PC-9 (cell line): ENCODE measurements at regions of chr2 and their contacts with region 1.

Region 1: DNA sequence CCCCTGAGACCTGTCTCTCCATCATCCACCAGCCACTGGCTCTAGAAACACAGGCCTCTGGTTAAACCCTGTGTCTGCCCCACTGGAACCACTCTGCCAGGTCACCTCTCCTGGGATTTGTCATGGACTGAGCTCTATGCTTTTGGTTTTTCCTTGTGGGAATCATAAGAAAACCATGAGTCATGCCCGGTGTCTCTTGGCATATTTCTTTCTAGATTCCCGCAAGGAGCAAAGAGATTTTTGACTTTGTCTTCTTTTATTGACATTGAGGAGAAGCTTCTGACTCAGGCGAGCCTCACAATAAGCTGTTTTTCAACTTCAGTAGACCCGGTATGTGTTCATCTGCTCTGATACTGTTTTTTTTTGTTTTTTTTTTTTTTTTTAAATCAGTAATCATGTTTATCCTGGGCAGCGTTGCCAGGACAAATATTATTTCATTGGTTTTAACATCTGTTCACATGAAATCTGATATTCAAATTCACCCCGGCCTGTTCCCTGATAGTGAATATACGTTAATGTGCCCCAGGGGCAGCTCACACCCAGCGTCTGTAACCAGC is 207.1 kb downstream of the ACKR3 start:
- DNase-seq: peak; percentile 49 to 81
- H3K4me3 ChIP-seq: no peak overlapping the region
- H3K27ac ChIP-seq: peak overlapping the region; percentile 81
- H3K4me1 ChIP-seq: peaks cover 35% of the 10 kb centered on the region
- H3K27me3 ChIP-seq: peaks cover 4% of the 10 kb centered on the region; the same call in 1 of the 2 replicates
- CTCF ChIP-seq: no peak

Region 2: GRCh38 chr2:235868224-235868623 is 908.5 kb before region 1 on chr2:
- CTCF ChIA-PET with region 1: no interaction called
- POLR2A ChIA-PET with region 1: interaction called, 13 read pairs
- intact Hi-C with region 1: no loop called
- DNase-seq: no peak
- H3K4me3 ChIP-seq: no peak overlapping the region
- H3K27ac ChIP-seq: no peak overlapping the region
- H3K4me1 ChIP-seq: no peaks in the 10 kb centered on the region
- H3K27me3 ChIP-seq: no peaks in the 10 kb centered on the region
- CTCF ChIP-seq: no peak

Region 3: GRCh38 chr2:236626391-236627081 is 150.2 kb before region 1 on chr2:
- CTCF ChIA-PET with region 1: no interaction called
- POLR2A ChIA-PET with region 1: interaction called, 10 read pairs
- intact Hi-C with region 1: no loop called
- DNase-seq: no peak
- H3K4me3 ChIP-seq: no peak overlapping the region
- H3K27ac ChIP-seq: no peak overlapping the region
- H3K4me1 ChIP-seq: peaks cover 4% of the 10 kb centered on the region; the same call in 1 of the 2 replicates
- H3K27me3 ChIP-seq: peaks cover 85% of the 10 kb centered on the region
- CTCF ChIP-seq: no peak

Region 4: GRCh38 chr2:236642584-236643291 is 134.0 kb before region 1 on chr2:
- CTCF ChIA-PET with region 1: no interaction called
- POLR2A ChIA-PET with region 1: no interaction called
- intact Hi-C with region 1: no loop called
- DNase-seq: peak; percentile 53 to 56
- H3K4me3 ChIP-seq: no peak overlapping the region
- H3K27ac ChIP-seq: peak overlapping the region; percentile 31; the same call in 1 of the 2 replicates
- H3K4me1 ChIP-seq: no peaks in the 10 kb centered on the region
- H3K27me3 ChIP-seq: peaks cover 12% of the 10 kb centered on the region; the same call in 1 of the 2 replicates
- CTCF ChIP-seq: no peak